AG04449 (cell line): ENCODE measurements at regions of chr14 and their contacts with region 1.

Region 1: GRCh38 chr14:75147423-75148071 is 20.7 kb upstream of the NEK9 start:
- DNase-seq: no peak
- H3K4me3 ChIP-seq: no peak overlapping the region
- CTCF ChIP-seq: peak; percentile 51

Region 2: DNA sequence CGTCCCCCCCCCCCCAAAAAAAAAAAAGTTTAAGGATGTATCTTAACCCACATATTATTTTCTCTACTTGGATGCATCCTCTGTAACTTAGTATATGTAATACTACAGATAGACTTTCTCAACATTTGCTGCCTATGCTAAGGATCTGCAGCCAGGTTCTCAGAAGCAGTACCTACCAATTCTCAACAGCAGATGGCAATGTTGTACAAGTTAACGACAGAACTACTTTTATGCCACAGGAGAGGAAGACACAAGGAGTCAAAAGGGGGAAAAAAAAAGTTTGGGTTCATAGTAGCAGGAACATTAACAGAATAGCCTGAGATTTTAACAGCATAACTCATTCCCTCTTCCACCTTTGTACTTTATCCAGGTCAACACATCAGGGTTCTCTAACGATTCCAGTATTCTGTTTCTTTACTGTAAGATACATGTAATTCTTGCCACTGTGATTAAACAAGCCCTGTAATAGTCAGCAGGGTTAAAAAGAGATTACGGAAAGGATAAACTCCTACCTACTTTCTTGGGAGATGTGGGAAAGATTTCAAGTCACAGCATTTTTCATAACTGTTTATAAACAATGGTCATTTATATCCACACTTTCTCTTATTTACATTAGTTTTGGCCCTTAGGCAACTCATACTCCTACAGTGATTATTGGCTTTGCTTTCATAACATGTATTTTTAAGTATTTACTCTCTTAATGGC is 15.0 kb before region 1 on chr14:
- CTCF ChIA-PET with region 1: interaction called, 48 read pairs
- POLR2A ChIA-PET with region 1: no interaction called
- DNase-seq: no peak
- H3K4me3 ChIP-seq: no peak overlapping the region
- CTCF ChIP-seq: peak; percentile 60

Region 3: GRCh38 chr14:75188520-75189268 is 41.1 kb after region 1 on chr14:
- CTCF ChIA-PET with region 1: no interaction called
- POLR2A ChIA-PET with region 1: no interaction called
- DNase-seq: no peak
- H3K4me3 ChIP-seq: no peak overlapping the region
- CTCF ChIP-seq: no peak